T-cell (primary cell): ENCODE measurements at regions of chr6 and their contacts with region 1.

Region 1: DNA sequence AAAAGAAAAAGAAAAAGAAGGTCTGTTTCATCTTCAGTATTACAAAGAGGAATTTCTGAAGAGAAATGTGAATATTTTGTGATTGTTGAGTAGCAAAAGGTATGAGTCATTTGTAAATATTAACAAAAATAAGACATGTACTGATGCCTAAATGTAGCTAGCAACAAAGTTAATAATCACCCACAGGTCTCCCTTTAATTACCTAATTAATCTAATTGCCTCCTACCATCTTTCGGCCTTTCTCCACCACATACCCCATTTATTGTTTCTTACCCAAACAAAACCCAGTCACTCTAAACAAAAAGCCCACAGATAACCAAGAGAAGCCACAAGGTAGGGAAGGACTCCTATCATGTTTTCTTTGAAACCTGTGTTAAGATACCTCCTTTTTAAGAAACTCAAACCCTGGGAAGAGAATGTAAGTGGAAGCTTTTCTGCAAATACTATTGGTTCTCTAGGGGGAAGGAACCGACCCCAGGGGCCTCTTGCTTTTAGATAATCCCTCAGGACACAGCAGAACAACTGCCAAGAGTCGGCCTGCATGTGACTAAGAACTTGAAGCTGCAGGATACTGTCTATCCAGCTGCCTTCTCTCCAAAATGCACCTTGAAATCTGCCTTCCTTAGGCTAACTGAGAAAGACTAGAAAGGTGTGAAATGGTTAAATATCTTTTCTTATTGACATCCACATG is 16.1 kb upstream of the STK38 start:
- DNase-seq: no peak
- ATAC-seq: no peak
- H3K4me3 ChIP-seq: no peak overlapping the region
- H3K4me3 Mint-ChIP-seq: no peak overlapping the region
- H3K27ac ChIP-seq: no peak overlapping the region
- H3K27ac Mint-ChIP-seq: peak overlapping the region in 1 of 2 donors; percentile 28
- H3K4me1 ChIP-seq: no peaks in the 10 kb centered on the region
- H3K4me1 Mint-ChIP-seq: peaks cover 0 to 2% (median 0%) of the 10 kb centered on the region in 3 donors
- H3K27me3 ChIP-seq: no peaks in the 10 kb centered on the region
- H3K27me3 Mint-ChIP-seq: peaks cover 0 to 3% of the 10 kb centered on the region in 2 donors

Region 2: DNA sequence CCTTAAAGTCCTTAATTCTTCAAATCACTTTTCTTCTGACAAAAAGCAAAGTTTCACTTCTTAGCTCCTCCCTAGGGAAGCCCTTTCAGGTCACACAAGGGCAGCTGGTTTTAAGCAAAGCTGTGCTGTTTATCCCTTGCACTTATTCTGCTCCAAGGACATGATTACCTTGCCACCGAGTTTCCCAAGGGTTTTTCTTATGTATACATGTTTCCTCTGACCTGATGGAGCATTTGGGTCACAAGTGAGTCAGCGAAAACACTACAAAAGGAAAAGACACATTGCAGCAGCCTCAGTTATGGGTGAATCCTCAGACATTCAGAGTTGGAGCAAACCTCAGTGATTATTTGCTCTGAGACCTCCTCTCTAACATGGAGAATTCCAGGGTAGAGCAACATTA is 1840.2 kb before region 1 on chr6:
- CTCF ChIA-PET with region 1: no interaction called
- POLR2A ChIA-PET with region 1: interaction called in 1 of 2 experiments, 11 read pairs
- DNase-seq: no peak
- ATAC-seq: no peak
- H3K4me3 ChIP-seq: no peak overlapping the region
- H3K4me3 Mint-ChIP-seq: no peak overlapping the region
- H3K27ac ChIP-seq: no peak overlapping the region
- H3K27ac Mint-ChIP-seq: no peak overlapping the region
- H3K4me1 ChIP-seq: no peaks in the 10 kb centered on the region
- H3K4me1 Mint-ChIP-seq: no peaks in the 10 kb centered on the region
- H3K27me3 ChIP-seq: no peaks in the 10 kb centered on the region
- H3K27me3 Mint-ChIP-seq: no peaks in the 10 kb centered on the region

Region 3: GRCh38 chr6:36139429-36139828 is 424.0 kb before region 1 on chr6:
- CTCF ChIA-PET with region 1: no interaction called
- POLR2A ChIA-PET with region 1: interaction called in 1 of 2 experiments, 14 read pairs
- DNase-seq: no peak
- ATAC-seq: no peak
- H3K4me3 ChIP-seq: no peak overlapping the region
- H3K4me3 Mint-ChIP-seq: no peak overlapping the region
- H3K27ac ChIP-seq: no peak overlapping the region
- H3K27ac Mint-ChIP-seq: peak overlapping the region; percentile 48 to 69
- H3K4me1 ChIP-seq: peaks cover 0 to 20% of the 10 kb centered on the region in 2 experiments
- H3K4me1 Mint-ChIP-seq: peaks cover 10 to 31% (median 21%) of the 10 kb centered on the region in 3 donors
- H3K27me3 ChIP-seq: no peaks in the 10 kb centered on the region
- H3K27me3 Mint-ChIP-seq: no peaks in the 10 kb centered on the region

Region 4: DNA sequence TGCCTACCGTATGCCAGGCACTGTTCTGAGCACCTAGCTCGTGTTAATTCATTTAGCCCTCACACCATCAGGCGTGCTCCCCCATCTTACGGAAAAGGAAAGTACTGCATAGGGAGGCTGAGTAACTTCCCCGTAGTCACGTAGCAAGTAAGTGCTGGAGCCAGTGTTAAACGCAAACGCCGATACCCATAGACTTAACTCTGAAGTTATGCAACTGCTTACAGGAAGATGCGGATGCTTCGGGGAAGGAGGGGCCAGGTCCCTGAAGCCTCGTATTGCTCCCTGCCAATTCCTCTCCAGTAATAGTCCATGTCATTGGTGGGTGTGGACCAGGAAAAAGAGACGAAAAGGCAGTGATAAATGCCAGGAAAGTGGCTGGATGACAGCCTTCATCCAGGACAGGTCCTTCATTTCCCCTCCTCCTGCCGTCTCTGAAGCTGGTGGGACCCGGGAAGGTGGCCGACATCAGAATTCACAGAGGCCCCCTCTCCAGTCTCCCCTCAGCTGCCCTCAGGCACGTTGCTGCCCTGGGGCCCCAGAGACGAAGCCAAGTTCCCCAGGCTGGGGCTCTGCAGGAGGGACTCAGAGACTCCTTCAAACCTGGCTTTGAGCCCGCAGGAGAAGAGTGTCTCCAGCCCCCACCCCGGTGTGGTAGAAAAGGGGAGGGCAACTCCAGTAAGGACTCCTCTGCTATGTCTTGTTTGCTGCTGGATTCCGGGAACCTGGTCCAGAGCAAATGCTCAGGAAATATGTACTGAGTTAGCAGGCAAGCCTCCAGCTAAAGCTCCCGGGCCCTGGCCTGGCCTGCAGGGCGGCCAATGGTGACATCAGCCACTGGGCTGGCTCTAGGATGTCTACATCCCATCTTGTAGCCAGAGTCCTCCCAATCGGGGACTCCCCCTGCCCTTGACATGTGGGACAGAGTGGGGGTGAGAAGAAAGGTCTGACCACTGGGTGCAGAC is 172.0 kb after region 1 on chr6:
- CTCF ChIA-PET with region 1: no interaction called
- POLR2A ChIA-PET with region 1: no interaction called
- DNase-seq: peak in 19 of 35 experiments; percentile 7 to 63 (median 21)
- ATAC-seq: peak; percentile 51 to 90 (median 62)
- H3K4me3 ChIP-seq: no peak overlapping the region
- H3K4me3 Mint-ChIP-seq: peak overlapping the region in 2 of 3 donors; percentile 45 to 64
- H3K27ac ChIP-seq: no peak overlapping the region
- H3K27ac Mint-ChIP-seq: peak overlapping the region in 1 of 2 donors; percentile 71
- H3K4me1 ChIP-seq: peaks cover 0 to 14% of the 10 kb centered on the region in 2 experiments
- H3K4me1 Mint-ChIP-seq: peaks cover 6 to 9% (median 8%) of the 10 kb centered on the region in 3 donors
- H3K27me3 ChIP-seq: peaks cover 0 to 4% of the 10 kb centered on the region in 2 experiments
- H3K27me3 Mint-ChIP-seq: peaks cover 3 to 4% of the 10 kb centered on the region in 2 donors